ENCODE measurements at regions of chr9 and their contacts with region 1.

Region 1: DNA sequence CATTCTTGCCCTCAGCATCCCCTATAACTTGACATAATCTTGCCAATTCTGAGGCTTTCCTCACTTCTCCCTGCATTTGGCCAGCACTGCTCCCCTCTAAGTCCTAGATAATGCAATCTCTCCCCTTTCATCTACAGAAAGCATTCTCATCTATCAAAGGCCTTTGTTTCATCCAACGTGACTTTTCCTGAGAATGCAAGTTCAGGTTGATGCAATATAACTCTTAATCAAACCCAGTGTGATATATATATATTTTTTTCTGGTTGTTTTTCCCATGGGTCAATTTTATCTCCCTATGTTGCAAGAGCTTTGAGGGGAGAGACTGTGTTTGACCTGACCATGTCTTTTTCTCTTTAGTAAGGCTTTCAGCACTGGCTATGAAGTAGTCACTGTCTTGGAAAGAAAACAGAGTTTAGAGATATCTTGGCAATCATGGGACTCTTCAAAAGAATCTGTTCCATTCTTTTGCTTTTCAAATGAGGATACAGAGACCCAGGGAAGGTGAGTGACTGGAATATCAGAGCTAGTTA is 268.6 kb downstream of the TRPM3 start:
- DNase-seq: no peak
- ATAC-seq: no peak
- H3K4me3 ChIP-seq: no peak overlapping the region
- H3K27ac ChIP-seq: no peak overlapping the region
- H3K4me1 ChIP-seq: no peaks in the 10 kb centered on the region
- H3K27me3 ChIP-seq: no peaks in the 10 kb centered on the region
- CTCF ChIP-seq: no peak
- POLR2A ChIP-seq: no peak

Region 2: DNA sequence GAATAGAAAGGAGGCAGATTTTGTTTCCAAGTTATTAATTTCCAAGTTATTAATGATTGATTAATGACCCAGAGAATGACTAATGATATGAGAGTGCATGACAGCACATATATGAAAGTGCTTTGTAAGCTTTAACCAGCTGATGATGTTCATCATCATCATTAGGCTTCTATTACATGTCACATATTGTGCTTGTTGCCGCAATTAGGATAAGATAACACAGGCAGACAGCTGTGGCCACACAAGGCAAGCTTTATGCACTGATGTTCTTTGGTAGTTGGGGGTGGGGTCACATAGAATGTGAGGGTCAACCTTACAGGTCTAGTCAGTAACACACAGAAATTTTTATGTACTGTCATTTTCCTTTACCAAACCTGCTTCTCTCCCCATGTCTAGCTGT is 49.0 kb after region 1 on chr9:
- in situ Hi-C with region 1: no loop called
- intact Hi-C with region 1: no loop called
- DNase-seq: no peak
- ATAC-seq: no peak
- H3K4me3 ChIP-seq: no peak overlapping the region
- H3K27ac ChIP-seq: no peak overlapping the region
- H3K4me1 ChIP-seq: no peaks in the 10 kb centered on the region
- H3K27me3 ChIP-seq: no peaks in the 10 kb centered on the region
- CTCF ChIP-seq: no peak
- POLR2A ChIP-seq: no peak

Region 3: DNA sequence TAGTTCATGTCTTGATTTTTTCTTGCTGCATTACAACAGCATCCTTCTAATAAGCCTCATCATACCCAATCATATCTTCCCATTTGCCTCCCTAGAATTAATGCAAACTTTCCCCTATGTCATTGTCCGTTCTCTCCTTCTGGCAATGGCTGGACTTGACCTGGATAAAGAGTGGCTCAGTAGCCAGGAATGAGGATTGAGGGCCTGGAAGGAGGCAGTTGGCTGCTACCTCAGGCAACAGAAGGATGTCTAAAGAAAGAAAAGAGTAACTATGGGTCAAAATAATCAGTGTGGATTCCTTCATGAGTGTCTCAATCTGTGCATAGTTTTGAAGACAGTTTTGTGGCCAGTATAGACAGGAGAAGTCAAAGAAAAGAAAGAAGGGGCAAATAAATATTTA is 59.0 kb after region 1 on chr9:
- in situ Hi-C with region 1: loop called in 1 of 4 experiments (anchors 10 kb)
- intact Hi-C with region 1: no loop called
- DNase-seq: no peak
- ATAC-seq: no peak
- H3K4me3 ChIP-seq: no peak overlapping the region
- H3K27ac ChIP-seq: no peak overlapping the region
- H3K4me1 ChIP-seq: no peaks in the 10 kb centered on the region
- H3K27me3 ChIP-seq: no peaks in the 10 kb centered on the region
- CTCF ChIP-seq: no peak
- POLR2A ChIP-seq: no peak

Region 4: DNA sequence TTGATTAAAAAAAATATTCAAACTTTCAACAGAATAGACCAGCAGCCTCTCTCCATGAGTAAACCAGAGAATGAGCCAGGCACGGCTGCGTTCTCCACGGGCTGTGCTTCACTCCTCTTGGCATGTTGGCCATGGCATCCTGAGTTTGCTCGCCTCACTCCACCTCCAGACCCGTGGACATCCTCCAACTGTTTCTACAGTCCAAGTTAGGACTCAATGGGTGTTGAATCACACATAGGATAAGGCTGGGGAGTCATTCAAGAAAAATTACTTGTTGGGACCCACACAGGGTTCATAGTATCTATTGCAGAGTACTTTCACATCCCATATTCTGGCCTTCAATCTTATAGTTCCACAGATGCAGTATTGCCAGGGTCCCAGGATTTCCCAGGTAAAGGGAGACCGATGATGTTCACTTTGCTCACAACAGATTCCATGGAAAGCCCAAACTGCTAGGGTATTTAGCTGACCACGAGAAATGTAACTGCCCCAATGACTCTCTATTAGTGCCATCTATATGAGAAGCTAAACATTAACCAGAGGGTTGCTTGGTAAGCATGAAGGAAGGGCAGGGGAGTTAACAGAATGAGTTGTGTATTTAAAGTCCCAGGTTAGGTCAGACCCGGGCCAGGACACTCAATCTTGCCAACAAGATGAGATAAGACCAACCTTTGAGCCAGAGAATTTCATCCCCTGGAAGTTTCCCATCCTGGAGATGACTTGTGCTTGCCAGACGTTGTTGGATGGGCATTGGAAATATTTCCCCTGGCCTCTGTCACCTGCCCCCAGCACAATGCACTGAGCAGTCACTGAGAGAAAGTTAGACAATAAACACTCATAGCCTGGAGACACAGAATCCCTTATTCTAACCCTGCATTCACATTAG is 1276.7 kb after region 1 on chr9:
- in situ Hi-C with region 1: no loop called
- intact Hi-C with region 1: no loop called
- DNase-seq: no peak
- ATAC-seq: peak in 1 of 2 donors; percentile 19
- H3K4me3 ChIP-seq: no peak overlapping the region
- H3K27ac ChIP-seq: peak overlapping the region in 1 of 4 donors; percentile 38
- H3K4me1 ChIP-seq: peaks cover 15 to 20% of the 10 kb centered on the region in 2 donors
- H3K27me3 ChIP-seq: no peaks in the 10 kb centered on the region
- CTCF ChIP-seq: no peak
- POLR2A ChIP-seq: no peak